HepG2 (cell line): ENCODE measurements at regions of chr1 and their contacts with region 1.

Region 1: GRCh38 chr1:44807262-44808062 is at the start of gene DYNLT4:
- DNase-seq: peak; percentile 98
- ATAC-seq: peak; percentile 83
- H3K4me3 ChIP-seq: peak within 1 kb of the TSS; percentile 70 to 87 (median 78)
- H3K27ac ChIP-seq: peak within 1 kb of the TSS; percentile 100
- H3K4me1 ChIP-seq: peaks cover 73% of the 10 kb centered on the region
- H3K27me3 ChIP-seq: no peaks in the 10 kb centered on the region
- CTCF ChIP-seq: peak; percentile 21
- EP300 ChIP-seq: peak; percentile 71 to 92
- POLR2A ChIP-seq: peak in 1 of 2 experiments; percentile 79; a peak in 2 of 4 replicates
- RAD21 ChIP-seq: no peak
- total RNA-seq, gene DYNLT4: 0.77 TPM in 1 of 2 replicates, not detected in the other

Region 2: DNA sequence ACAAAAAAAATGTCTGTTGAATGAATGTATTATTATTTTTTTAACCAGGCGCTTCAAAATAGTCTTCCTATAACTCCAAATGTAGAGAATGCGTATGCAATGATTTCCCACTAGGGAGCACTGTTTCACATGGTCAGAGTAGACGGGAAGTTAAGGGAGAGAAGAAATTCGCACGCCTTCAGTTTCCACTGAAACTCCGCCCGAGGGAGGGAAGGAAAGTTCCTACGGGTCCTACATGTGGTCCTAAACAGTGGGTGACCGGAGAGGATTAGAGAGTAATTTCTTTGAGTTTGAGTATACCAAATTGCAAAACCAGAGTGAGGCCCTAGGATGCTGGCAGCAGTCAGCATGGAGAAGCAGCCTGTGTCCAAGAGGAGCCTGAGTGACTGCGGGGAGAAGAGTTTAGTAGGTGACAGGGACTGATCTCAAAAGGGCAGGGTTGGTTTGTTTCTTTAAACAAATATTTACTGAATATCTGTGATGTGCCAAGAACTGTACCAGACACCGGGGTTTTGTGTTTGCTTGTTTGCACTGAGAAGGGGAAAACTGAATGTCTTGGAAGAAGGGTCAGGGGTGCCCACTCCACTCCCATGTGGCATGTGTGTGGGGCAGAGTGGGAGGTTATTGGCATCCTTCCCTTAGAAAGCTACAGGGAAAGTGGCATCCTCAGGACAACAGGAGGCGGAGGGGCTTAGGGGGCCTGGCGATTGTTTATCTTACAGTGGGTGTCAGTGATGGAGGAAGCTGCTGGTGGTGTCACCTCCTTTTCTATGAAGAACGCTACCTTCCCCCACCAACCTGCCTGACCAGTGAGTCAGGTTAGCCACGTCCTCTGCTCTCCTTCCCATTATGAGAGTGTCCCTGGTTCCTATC is 99.3 kb before region 1 on chr1:
- CTCF ChIA-PET with region 1: no interaction called
- POLR2A ChIA-PET with region 1: no interaction called
- in situ Hi-C with region 1: no loop called
- intact Hi-C with region 1: no loop called
- DNase-seq: peak; percentile 54
- ATAC-seq: peak; percentile 84
- H3K4me3 ChIP-seq: peak overlapping the region in 2 of 3 experiments; percentile 27 to 37; a peak in 3 of 6 replicates
- H3K27ac ChIP-seq: peak overlapping the region; percentile 20
- H3K4me1 ChIP-seq: peaks cover 59% of the 10 kb centered on the region
- H3K27me3 ChIP-seq: no peaks in the 10 kb centered on the region; a peak in 1 of 5 replicates
- CTCF ChIP-seq: peak; percentile 70
- EP300 ChIP-seq: peak in 1 of 2 experiments; percentile 60; a peak in 2 of 4 replicates
- POLR2A ChIP-seq: no peak
- RAD21 ChIP-seq: peak; percentile 13; the same call in 1 of the 2 replicates

Region 3: DNA sequence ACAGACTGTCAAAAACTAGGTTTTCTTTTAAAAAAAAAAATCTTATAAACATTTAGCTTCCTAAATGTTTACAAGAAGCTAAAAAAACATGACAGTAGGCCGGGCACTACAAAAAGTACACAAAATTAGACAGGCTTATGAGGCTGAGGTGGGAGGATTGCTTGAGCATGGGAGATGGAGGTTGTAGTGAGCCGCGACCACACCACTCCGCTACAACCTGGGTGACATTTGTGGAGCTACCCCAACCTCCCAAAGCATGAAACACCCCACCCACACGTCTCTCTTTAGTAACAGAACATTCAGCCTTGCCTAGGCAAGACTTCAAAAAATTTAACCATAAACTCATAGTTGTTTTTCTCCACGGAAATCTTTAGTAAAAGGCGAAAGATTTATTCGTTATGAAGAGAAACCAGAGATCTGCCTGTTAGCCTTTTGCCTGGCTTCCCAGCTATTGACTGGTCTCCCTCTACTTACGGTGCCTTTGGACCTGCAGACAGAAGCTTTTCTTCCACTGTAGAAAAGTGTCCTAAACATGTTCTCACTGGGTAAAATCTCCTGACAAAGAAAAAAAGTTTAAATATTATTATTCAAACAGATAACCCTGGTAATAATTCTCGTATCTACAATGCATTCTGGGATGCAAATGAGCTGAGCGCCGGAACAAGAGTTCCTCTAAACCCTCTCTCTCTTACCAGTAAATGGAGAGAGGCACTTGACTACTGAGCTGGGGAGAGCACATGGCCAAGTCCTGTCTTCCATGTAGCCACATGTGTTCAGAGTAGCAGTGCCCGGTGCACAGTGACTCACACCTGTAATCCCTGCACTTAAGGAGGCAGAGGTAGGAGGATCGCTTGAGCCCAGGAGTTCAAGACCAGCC is 85.7 kb before region 1 on chr1:
- CTCF ChIA-PET with region 1: no interaction called
- POLR2A ChIA-PET with region 1: interaction called, 28 read pairs
- in situ Hi-C with region 1: no loop called
- intact Hi-C with region 1: no loop called
- DNase-seq: peak; percentile 95
- ATAC-seq: peak; percentile 94
- H3K4me3 ChIP-seq: no peak overlapping the region; a peak in 1 of 6 replicates
- H3K27ac ChIP-seq: peak overlapping the region; percentile 84
- H3K4me1 ChIP-seq: peaks cover 54% of the 10 kb centered on the region
- H3K27me3 ChIP-seq: 0 out of 5 replicates have a peak, but pooled peaks cover 0 to 6% of the 10 kb centered on the region in 2 experiments
- CTCF ChIP-seq: no peak
- EP300 ChIP-seq: peak; percentile 59 to 63; a peak in 3 of 4 replicates
- POLR2A ChIP-seq: peak; percentile 100
- RAD21 ChIP-seq: peak; percentile 86

Region 4: GRCh38 chr1:44775078-44775929 is 32.2 kb before region 1 on chr1 and contains the start of gene RPS8:
- CTCF ChIA-PET with region 1: no interaction called
- POLR2A ChIA-PET with region 1: interaction called, 37 read pairs
- in situ Hi-C with region 1: no loop called
- intact Hi-C with region 1: no loop called
- DNase-seq: peak; percentile 91
- ATAC-seq: peak; percentile 80
- H3K4me3 ChIP-seq: peak within 1 kb of the TSS; percentile 84 to 97 (median 96)
- H3K27ac ChIP-seq: peak within 1 kb of the TSS; percentile 81
- H3K4me1 ChIP-seq: peaks cover 40% of the 10 kb centered on the region
- H3K27me3 ChIP-seq: no peaks in the 10 kb centered on the region; a peak in 1 of 5 replicates
- CTCF ChIP-seq: 0 out of 2 replicates have a peak, but pooled peaks have one; percentile 9
- EP300 ChIP-seq: 0 out of 4 replicates have a peak, but pooled peaks of 1 of the 2 experiments have one; percentile 11
- POLR2A ChIP-seq: peak; percentile 99
- RAD21 ChIP-seq: peak; percentile 39
- total RNA-seq, gene RPS8: 2,628 and 3,186 TPM in 2 replicates

Region 5: GRCh38 chr1:44786138-44786840 is 21.2 kb before region 1 on chr1:
- CTCF ChIA-PET with region 1: no interaction called
- POLR2A ChIA-PET with region 1: interaction called, 34 read pairs
- in situ Hi-C with region 1: no loop called
- intact Hi-C with region 1: no loop called
- DNase-seq: peak; percentile 60
- ATAC-seq: peak; percentile 23
- H3K4me3 ChIP-seq: peak overlapping the region in 2 of 3 experiments; percentile 34 to 79; a peak in 3 of 6 replicates
- H3K27ac ChIP-seq: no peak overlapping the region
- H3K4me1 ChIP-seq: peaks cover 61% of the 10 kb centered on the region
- H3K27me3 ChIP-seq: peaks cover 3 to 17% of the 10 kb centered on the region in 2 experiments; a peak in 2 of 5 replicates
- CTCF ChIP-seq: peak; percentile 91
- EP300 ChIP-seq: peak; percentile 9 to 62; a peak in 1 of 4 replicates
- POLR2A ChIP-seq: no peak; a peak in 1 of 4 replicates
- RAD21 ChIP-seq: peak; percentile 87

Region 6: GRCh38 chr1:44819608-44820327 is 12.3 kb after region 1 on chr1:
- CTCF ChIA-PET with region 1: no interaction called
- POLR2A ChIA-PET with region 1: interaction called, 570 read pairs
- in situ Hi-C with region 1: no loop called
- intact Hi-C with region 1: no loop called
- DNase-seq: peak; percentile 90
- ATAC-seq: peak; percentile 89
- H3K4me3 ChIP-seq: peak overlapping the region; percentile 57 to 80 (median 64)
- H3K27ac ChIP-seq: peak overlapping the region; percentile 100
- H3K4me1 ChIP-seq: peaks cover 30% of the 10 kb centered on the region
- H3K27me3 ChIP-seq: no peaks in the 10 kb centered on the region
- CTCF ChIP-seq: peak; percentile 36; the same call in 1 of the 2 replicates
- EP300 ChIP-seq: peak; percentile 64 to 75; a peak in 2 of 4 replicates
- POLR2A ChIP-seq: peak in 1 of 2 experiments; percentile 100; a peak in 2 of 4 replicates
- RAD21 ChIP-seq: peak; percentile 38

Region 7: DNA sequence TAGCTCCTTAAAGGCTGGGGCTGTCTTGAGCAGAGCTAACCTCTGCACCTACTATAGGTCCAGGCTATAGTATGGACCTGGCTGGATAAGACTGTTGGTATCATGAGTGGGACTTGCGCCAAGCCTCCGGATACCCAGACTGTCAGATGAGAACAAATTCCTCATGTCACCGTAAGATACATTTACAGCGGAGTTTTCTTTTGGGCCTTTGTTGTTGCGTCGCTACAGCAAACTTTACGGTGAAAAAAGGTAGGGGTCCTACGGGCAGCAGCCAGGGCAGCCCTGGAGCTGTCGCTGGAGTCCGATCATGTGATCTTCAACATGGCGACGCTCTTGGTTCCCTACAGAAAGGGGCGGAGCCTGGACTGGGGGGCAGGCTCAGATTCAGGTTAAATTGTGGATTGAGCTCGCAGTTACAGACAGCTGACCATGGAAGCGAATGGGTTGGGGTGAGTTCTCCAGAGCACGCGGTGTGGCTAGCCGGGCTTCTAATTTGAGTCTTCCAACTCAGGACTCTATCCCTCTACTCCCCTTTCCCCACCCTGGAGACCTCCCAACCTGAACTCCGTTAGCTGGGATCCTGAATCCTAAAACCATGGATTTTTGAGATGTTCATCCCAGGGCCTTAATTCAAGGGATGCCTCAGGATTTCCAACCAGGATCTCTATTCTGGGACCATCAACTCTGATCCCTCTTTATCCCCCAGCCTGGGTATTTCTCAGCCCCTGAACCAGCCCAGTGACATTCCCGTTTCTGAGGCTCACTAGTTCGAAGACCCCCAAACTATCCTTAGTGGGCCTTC is 204.6 kb after region 1 on chr1 and contains the start of gene UROD:
- CTCF ChIA-PET with region 1: no interaction called
- POLR2A ChIA-PET with region 1: interaction called, 25 read pairs
- in situ Hi-C with region 1: no loop called
- intact Hi-C with region 1: no loop called
- DNase-seq: peak; percentile 94
- ATAC-seq: peak; percentile 75
- H3K4me3 ChIP-seq: peak within 1 kb of the TSS; percentile 73 to 95 (median 78)
- H3K27ac ChIP-seq: peak within 1 kb of the TSS; percentile 85
- H3K4me1 ChIP-seq: peaks cover 32% of the 10 kb centered on the region
- H3K27me3 ChIP-seq: no peaks in the 10 kb centered on the region; a peak in 1 of 5 replicates
- CTCF ChIP-seq: peak; percentile 4; the same call in 1 of the 2 replicates
- EP300 ChIP-seq: 0 out of 4 replicates have a peak, but pooled peaks of 1 of the 2 experiments have one; percentile 12
- POLR2A ChIP-seq: peak; percentile 91 to 96
- RAD21 ChIP-seq: no peak
- total RNA-seq, gene UROD: 171 and 243 TPM in 2 replicates